ENCODE measurements at regions of chr20 and their contacts with region 1.

Region 1: GRCh38 chr20:32652739-32653526 is 20.8 kb downstream of the C20orf203 start:
- DNase-seq: peak; percentile 86
- ATAC-seq: peak; percentile 96 to 97

Region 2: GRCh38 chr20:32521780-32522525 is 131.0 kb before region 1 on chr20:
- intact Hi-C with region 1: loop called (anchors 1 to 2 kb)
- DNase-seq: peak; percentile 73
- ATAC-seq: peak; percentile 76 to 85